ENCODE measurements at regions of chr3 and their contacts with region 1.

Region 1: GRCh38 chr3:50298836-50299637 is at the starts of genes HYAL3 and NAA80:
- DNase-seq: peak; percentile 99
- H3K4me3 Mint-ChIP-seq: peak within 1 kb of the TSS; percentile 98
- H3K27ac Mint-ChIP-seq: peak within 1 kb of the TSS; percentile 93
- H3K4me1 Mint-ChIP-seq: peaks cover 17% of the 10 kb centered on the region
- H3K27me3 Mint-ChIP-seq: no peaks in the 10 kb centered on the region
- total RNA-seq, gene HYAL3: 10.8 TPM in 2 replicates
- total RNA-seq, gene NAA80: 24.9 and 25.0 TPM in 2 replicates

Region 2: GRCh38 chr3:50235716-50236496 is 63.1 kb before region 1 on chr3 and contains the start of gene GNAI2:
- intact Hi-C with region 1: loop called (anchors 2 kb)
- DNase-seq: peak; percentile 99
- H3K4me3 Mint-ChIP-seq: peak within 1 kb of the TSS; percentile 95
- H3K27ac Mint-ChIP-seq: peak within 1 kb of the TSS; percentile 89
- H3K4me1 Mint-ChIP-seq: peaks cover 24% of the 10 kb centered on the region
- H3K27me3 Mint-ChIP-seq: no peaks in the 10 kb centered on the region
- total RNA-seq, gene GNAI2: 267 and 269 TPM in 2 replicates

Region 3: DNA sequence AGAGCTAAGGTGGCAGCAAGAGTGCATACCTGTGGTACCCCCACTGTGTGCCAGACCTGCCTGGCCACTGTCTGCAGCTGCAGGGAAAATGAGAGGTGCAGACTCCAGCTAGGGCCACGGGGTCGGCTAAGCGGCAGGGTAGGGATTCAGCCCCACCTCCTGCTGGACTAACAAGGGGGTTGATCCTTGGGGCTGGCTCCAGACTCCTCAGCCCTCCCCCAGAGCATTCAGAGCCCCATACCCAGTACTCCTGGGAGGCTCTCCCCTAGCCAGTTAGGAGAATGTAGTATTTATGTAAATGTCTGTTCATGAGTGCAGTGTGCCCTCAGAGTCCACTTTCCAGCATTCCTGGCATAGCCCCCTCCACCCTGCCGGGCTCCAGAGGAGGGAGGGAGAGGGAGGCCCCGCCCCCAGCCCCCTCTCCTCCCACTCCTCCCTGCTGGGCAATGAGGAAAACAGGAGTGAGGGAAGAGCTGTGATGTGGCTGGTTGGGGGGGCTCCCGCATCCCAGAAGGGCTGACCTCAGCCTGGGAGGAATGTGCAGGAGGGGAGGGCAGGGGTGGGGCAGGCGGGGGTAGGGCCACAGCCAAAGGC is 34.6 kb before region 1 on chr3:
- intact Hi-C with region 1: no loop called
- DNase-seq: no peak
- H3K4me3 Mint-ChIP-seq: no peak overlapping the region
- H3K27ac Mint-ChIP-seq: no peak overlapping the region
- H3K4me1 Mint-ChIP-seq: peaks cover 3% of the 10 kb centered on the region
- H3K27me3 Mint-ChIP-seq: peaks cover 17% of the 10 kb centered on the region

Region 4: GRCh38 chr3:50321336-50322114 is 22.5 kb after region 1 on chr3:
- intact Hi-C with region 1: loop called (anchors 1 kb)
- DNase-seq: peak; percentile 84
- H3K4me3 Mint-ChIP-seq: peak overlapping the region; percentile 74
- H3K27ac Mint-ChIP-seq: peak overlapping the region; percentile 92
- H3K4me1 Mint-ChIP-seq: peaks cover 11% of the 10 kb centered on the region
- H3K27me3 Mint-ChIP-seq: no peaks in the 10 kb centered on the region

Region 5: DNA sequence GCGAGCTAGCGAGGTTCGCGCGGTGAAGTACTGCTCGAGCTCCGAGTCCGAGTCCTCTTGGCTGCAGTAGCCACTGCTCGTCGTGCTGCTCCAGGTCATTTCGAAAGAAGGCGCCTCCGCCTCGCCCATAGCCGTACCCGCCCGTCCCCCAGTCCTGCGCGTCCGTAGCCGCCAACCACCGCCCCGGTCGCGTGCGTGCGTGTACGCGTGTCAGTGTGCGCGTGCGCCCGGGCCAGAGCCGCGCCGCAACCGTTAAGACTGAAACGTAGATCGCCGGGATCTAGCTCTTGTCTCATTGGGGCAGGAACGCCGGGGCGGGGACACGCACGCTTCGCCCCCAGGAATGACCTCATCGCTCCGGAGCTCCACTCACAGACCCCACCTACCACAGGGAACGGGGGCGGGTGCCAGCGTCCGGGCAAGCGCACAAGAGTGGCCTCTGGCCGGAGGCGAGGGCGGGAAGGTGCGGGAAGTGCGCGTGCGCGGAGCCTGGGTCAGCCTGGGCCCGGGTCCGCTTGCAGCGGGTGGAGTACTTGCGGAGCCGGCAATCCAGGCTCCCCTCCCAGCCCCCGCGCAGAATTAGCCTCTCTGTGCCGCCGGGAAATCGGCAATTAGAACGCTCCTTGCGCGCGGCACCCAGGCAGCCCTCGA is 38.3 kb after region 1 on chr3:
- intact Hi-C with region 1: loop called (anchors 1 kb)
- DNase-seq: peak; percentile 97
- H3K4me3 Mint-ChIP-seq: peak overlapping the region; percentile 95
- H3K27ac Mint-ChIP-seq: peak overlapping the region; percentile 93
- H3K4me1 Mint-ChIP-seq: peaks cover 41% of the 10 kb centered on the region
- H3K27me3 Mint-ChIP-seq: no peaks in the 10 kb centered on the region